ENCODE measurements at regions of chr17 and their contacts with region 1.

Region 1: GRCh38 chr17:16304830-16305229 is 48.4 kb downstream of the CENPV start:
- DNase-seq: peak; percentile 15

Region 2: GRCh38 chr17:16232391-16232790 is 72.4 kb before region 1 on chr17:
- intact Hi-C with region 1: loop called in 1 of 2 experiments (anchors 2 kb)
- DNase-seq: no peak

Region 3: GRCh38 chr17:16419074-16419928 is 114.5 kb after region 1 on chr17:
- intact Hi-C with region 1: no loop called
- DNase-seq: no peak

Measured in posterior vena cava (tissue), 2 donors.